Naive thymus-derived CD4-positive, alpha-beta T cell (primary cell): ENCODE measurements at regions of chr13 and their contacts with region 1.

Region 1: GRCh38 chr13:99442273-99442895 is 58.9 kb upstream of the TM9SF2 start:
- DNase-seq: peak in 7 of 9 donors; percentile 50 to 75 (median 68)
- ATAC-seq: peak; percentile 95
- H3K4me3 ChIP-seq: no peak overlapping the region
- H3K4me3 Mint-ChIP-seq: no peak overlapping the region
- H3K27ac ChIP-seq: no peak overlapping the region
- H3K27ac Mint-ChIP-seq: peak overlapping the region in 1 of 9 donors; percentile 47
- H3K4me1 ChIP-seq: peaks cover 0 to 3% of the 10 kb centered on the region in 2 donors
- H3K4me1 Mint-ChIP-seq: peaks cover 2 to 17% (median 7%) of the 10 kb centered on the region in 7 donors
- H3K27me3 ChIP-seq: no peaks in the 10 kb centered on the region
- H3K27me3 Mint-ChIP-seq: peaks cover 0 to 30% (median 0%) of the 10 kb centered on the region in 5 donors

Region 2: GRCh38 chr13:99484473-99484872 is 42.1 kb after region 1 on chr13:
- CTCF ChIA-PET with region 1: interaction called, 3 read pairs
- POLR2A ChIA-PET with region 1: no interaction called
- intact Hi-C with region 1: loop called in 1 of 2 experiments (anchors 1 kb)
- DNase-seq: no peak
- ATAC-seq: peak; percentile 82
- H3K4me3 ChIP-seq: no peak overlapping the region
- H3K4me3 Mint-ChIP-seq: peak overlapping the region in 1 of 10 donors; percentile 29
- H3K27ac ChIP-seq: no peak overlapping the region
- H3K27ac Mint-ChIP-seq: peak overlapping the region in 2 of 9 donors; percentile 16 to 54
- H3K4me1 ChIP-seq: no peaks in the 10 kb centered on the region
- H3K4me1 Mint-ChIP-seq: peaks cover 0 to 24% (median 10%) of the 10 kb centered on the region in 7 donors
- H3K27me3 ChIP-seq: no peaks in the 10 kb centered on the region
- H3K27me3 Mint-ChIP-seq: no peaks in the 10 kb centered on the region

Region 3: DNA sequence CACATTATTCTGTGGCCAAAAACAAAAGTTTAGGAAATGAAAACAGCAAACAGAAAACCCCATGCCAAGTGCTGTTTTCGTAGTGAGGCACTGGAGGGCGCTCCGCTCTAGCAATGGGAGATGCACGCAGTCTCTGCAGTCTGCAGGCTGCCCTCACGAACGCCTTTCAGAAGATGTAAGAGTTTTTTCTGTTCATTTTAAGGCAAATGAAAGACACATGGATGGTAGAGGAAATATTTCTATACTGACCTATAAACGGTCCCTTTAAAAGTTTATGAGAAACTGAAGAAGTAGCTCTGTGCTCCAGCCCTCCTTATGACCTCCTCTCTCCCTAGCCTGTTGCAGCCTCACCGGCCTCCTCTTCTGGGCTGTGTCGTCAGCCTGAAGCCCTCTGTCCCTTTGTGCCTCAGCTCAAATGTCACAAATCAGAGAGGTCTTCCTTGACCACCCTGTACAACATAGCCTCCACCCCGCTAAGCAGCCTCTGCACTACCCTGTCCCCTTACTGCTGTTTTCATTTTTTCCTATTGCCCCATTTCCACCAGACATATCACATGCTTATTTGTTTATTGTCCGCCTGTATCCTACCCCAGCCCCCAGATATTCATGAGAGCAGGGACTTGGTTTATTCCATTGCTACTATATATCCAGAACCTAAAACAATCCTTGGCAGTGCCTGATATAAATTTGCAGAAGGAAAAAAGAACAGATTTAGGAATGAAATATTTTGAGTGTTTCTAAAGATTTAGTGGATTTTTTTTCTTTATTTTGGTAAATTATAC is 175.3 kb after region 1 on chr13:
- CTCF ChIA-PET with region 1: no interaction called
- POLR2A ChIA-PET with region 1: no interaction called
- intact Hi-C with region 1: loop called in 1 of 2 experiments (anchors 1 kb)
- DNase-seq: peak in 2 of 9 donors; percentile 19 to 20
- ATAC-seq: peak; percentile 56
- H3K4me3 ChIP-seq: no peak overlapping the region
- H3K4me3 Mint-ChIP-seq: no peak overlapping the region
- H3K27ac ChIP-seq: no peak overlapping the region
- H3K27ac Mint-ChIP-seq: peak overlapping the region in 1 of 9 donors; percentile 2
- H3K4me1 ChIP-seq: no peaks in the 10 kb centered on the region
- H3K4me1 Mint-ChIP-seq: peaks cover 6 to 40% (median 24%) of the 10 kb centered on the region in 7 donors
- H3K27me3 ChIP-seq: no peaks in the 10 kb centered on the region
- H3K27me3 Mint-ChIP-seq: peaks cover 0 to 6% (median 0%) of the 10 kb centered on the region in 5 donors

Region 4: DNA sequence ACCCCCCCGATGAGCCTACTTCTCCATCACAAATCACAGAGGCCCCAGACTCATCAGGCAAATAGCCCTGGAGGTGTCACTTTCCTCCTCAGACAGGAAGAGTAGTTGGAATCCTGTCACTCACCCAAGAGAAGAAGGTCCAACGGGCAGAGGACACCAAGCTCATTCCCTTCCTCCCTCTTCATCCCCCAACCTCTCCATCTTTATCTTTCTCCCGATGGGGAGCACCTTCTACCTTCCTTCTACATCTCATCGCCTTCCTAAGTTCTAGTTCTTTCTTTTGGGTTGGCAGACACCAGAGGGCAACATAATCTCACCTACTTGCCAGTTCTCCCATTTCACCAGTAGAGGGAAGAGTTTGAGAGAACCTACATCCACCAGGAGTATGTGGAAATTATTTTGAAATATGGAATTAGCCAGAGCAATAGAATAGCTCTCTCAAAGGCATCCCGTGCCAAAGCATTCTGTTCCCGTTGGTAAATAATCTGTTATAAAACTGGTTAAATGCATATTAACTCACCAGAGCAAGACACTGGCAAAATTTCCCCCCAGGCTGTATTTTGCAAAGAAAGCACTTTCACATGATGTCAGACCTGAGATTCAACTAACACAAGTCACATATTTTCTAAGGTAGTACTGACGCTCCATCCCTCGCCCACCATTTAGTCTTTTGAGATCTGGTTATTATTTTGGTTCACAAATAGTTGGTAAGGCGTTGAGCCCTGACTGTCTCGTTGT is 474.2 kb after region 1 on chr13:
- CTCF ChIA-PET with region 1: interaction called, 3 read pairs
- POLR2A ChIA-PET with region 1: no interaction called
- intact Hi-C with region 1: loop called in 1 of 2 experiments (anchors 5 kb)
- DNase-seq: peak in 6 of 9 donors; percentile 18 to 62 (median 50)
- ATAC-seq: peak; percentile 85
- H3K4me3 ChIP-seq: no peak overlapping the region
- H3K4me3 Mint-ChIP-seq: no peak overlapping the region
- H3K27ac ChIP-seq: no peak overlapping the region
- H3K27ac Mint-ChIP-seq: peak overlapping the region in 1 of 9 donors; percentile 3
- H3K4me1 ChIP-seq: peaks cover 0 to 8% of the 10 kb centered on the region in 2 donors
- H3K4me1 Mint-ChIP-seq: peaks cover 5 to 31% (median 7%) of the 10 kb centered on the region in 7 donors
- H3K27me3 ChIP-seq: no peaks in the 10 kb centered on the region
- H3K27me3 Mint-ChIP-seq: peaks cover 3 to 21% (median 5%) of the 10 kb centered on the region in 5 donors

Region 5: DNA sequence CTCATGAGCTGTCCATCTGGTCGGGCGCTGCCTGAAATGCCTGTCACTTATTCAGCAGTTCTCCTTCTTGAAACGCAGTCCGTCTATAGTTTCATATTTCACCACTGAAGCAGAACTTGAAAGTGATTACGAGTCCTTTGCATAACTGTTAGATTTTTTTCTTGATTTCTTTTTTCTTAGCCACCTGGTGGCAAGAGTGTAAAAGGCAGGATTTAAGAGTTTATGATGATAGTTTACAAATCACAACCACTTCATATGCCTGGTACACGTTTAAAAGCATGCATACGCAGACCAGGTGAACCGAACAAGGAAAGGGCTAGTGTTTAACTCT is 1100.4 kb after region 1 on chr13:
- CTCF ChIA-PET with region 1: no interaction called
- POLR2A ChIA-PET with region 1: no interaction called
- intact Hi-C with region 1: loop called in 1 of 2 experiments (anchors 1 kb)
- DNase-seq: peak in 7 of 9 donors; percentile 19 to 58 (median 51)
- ATAC-seq: peak; percentile 76
- H3K4me3 ChIP-seq: no peak overlapping the region
- H3K4me3 Mint-ChIP-seq: peak overlapping the region in 9 of 10 donors; percentile 10 to 81 (median 55)
- H3K27ac ChIP-seq: no peak overlapping the region
- H3K27ac Mint-ChIP-seq: peak overlapping the region in 1 of 9 donors; percentile 19
- H3K4me1 ChIP-seq: peaks cover 0 to 22% of the 10 kb centered on the region in 2 donors
- H3K4me1 Mint-ChIP-seq: peaks cover 7 to 48% (median 31%) of the 10 kb centered on the region in 7 donors
- H3K27me3 ChIP-seq: no peaks in the 10 kb centered on the region
- H3K27me3 Mint-ChIP-seq: peaks cover 0 to 3% (median 0%) of the 10 kb centered on the region in 5 donors